Mammary epithelial cell (primary cell): ENCODE measurements at regions of chrX and their contacts with region 1.

Region 1: GRCh38 chrX:118847676-118848075 is 24.1 kb downstream of the ZCCHC12 start:
- DNase-seq: peak; percentile 42
- H3K4me3 ChIP-seq: no peak overlapping the region
- H3K27ac ChIP-seq: no peak overlapping the region
- H3K4me1 ChIP-seq: no peaks in the 10 kb centered on the region
- H3K27me3 ChIP-seq: peaks cover 2% of the 10 kb centered on the region
- CTCF ChIP-seq: peak; percentile 56 to 74

Region 2: DNA sequence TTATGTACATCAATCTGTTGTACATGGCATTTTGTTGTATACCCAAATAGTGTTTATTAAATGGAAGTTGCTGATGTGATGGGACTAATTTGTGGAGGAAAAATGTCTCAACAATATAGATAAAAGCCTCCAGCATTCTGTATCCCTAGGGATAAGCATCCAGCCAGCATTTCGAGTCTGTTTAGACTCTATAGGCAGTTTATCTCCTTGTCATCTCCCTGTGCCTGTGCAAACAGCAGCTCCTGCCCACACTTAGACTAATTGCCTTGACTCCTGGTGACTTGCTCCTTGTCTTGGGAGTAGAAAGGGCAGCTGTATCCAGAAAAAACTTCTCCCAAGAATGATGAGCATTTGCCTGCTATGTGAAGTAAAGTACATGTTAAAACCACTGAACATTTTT is 268.3 kb before region 1 on chrX:
- CTCF ChIA-PET with region 1: no interaction called
- dilution Hi-C with region 1: no loop called
- in situ Hi-C with region 1: no loop called
- intact Hi-C with region 1: no loop called
- DNase-seq: no peak
- H3K4me3 ChIP-seq: no peak overlapping the region
- H3K27ac ChIP-seq: no peak overlapping the region
- H3K4me1 ChIP-seq: no peaks in the 10 kb centered on the region
- H3K27me3 ChIP-seq: no peaks in the 10 kb centered on the region
- CTCF ChIP-seq: no peak

Region 3: GRCh38 chrX:118736394-118737010 is 111.2 kb before region 1 on chrX:
- CTCF ChIA-PET with region 1: no interaction called
- dilution Hi-C with region 1: no loop called
- in situ Hi-C with region 1: no loop called
- intact Hi-C with region 1: no loop called
- DNase-seq: no peak
- H3K4me3 ChIP-seq: no peak overlapping the region
- H3K27ac ChIP-seq: no peak overlapping the region
- H3K4me1 ChIP-seq: peaks cover 7% of the 10 kb centered on the region
- H3K27me3 ChIP-seq: no peaks in the 10 kb centered on the region
- CTCF ChIP-seq: no peak

Region 4: GRCh38 chrX:119004920-119005524 is 157.3 kb after region 1 on chrX:
- CTCF ChIA-PET with region 1: interaction called, 5 read pairs
- dilution Hi-C with region 1: no loop called
- in situ Hi-C with region 1: loop called in 1 of 2 experiments (anchors 10 kb)
- intact Hi-C with region 1: loop called (anchors 1 kb)
- DNase-seq: peak; percentile 14
- H3K4me3 ChIP-seq: no peak overlapping the region
- H3K27ac ChIP-seq: no peak overlapping the region
- H3K4me1 ChIP-seq: no peaks in the 10 kb centered on the region
- H3K27me3 ChIP-seq: no peaks in the 10 kb centered on the region
- CTCF ChIP-seq: peak; percentile 94 to 97

Region 5: GRCh38 chrX:119211649-119212014 is 364.0 kb after region 1 on chrX:
- CTCF ChIA-PET with region 1: no interaction called
- dilution Hi-C with region 1: no loop called
- in situ Hi-C with region 1: no loop called
- intact Hi-C with region 1: loop called (anchors 1 kb)
- DNase-seq: no peak
- H3K4me3 ChIP-seq: no peak overlapping the region
- H3K27ac ChIP-seq: no peak overlapping the region
- H3K4me1 ChIP-seq: no peaks in the 10 kb centered on the region
- H3K27me3 ChIP-seq: peaks cover 2% of the 10 kb centered on the region
- CTCF ChIP-seq: no peak

Region 6: GRCh38 chrX:119266364-119266995 is 418.8 kb after region 1 on chrX:
- CTCF ChIA-PET with region 1: no interaction called
- dilution Hi-C with region 1: no loop called
- in situ Hi-C with region 1: no loop called
- intact Hi-C with region 1: loop called (anchors 2 kb)
- DNase-seq: peak; percentile 6
- H3K4me3 ChIP-seq: no peak overlapping the region
- H3K27ac ChIP-seq: no peak overlapping the region
- H3K4me1 ChIP-seq: no peaks in the 10 kb centered on the region
- H3K27me3 ChIP-seq: no peaks in the 10 kb centered on the region
- CTCF ChIP-seq: peak; percentile 62 to 81